Activated T-helper 1 cell treated with anti-CD3 and anti-CD28 coated beads, Interleukin-12 subunit alpha, Interleukin-12 subunit beta, Interleukin-2, Interleukin-4 antibody, amounts not matched to agents 30 ng/mL and 10 ng/mL and 1 ng/mL, durations not matched to agents 14 hours and 24 hours and 36 hours (primary cell): ENCODE measurements at regions of chr7 and their contacts with region 1.

Region 1: GRCh38 chr7:90346336-90347125 is at the start of gene GTPBP10:
- DNase-seq: peak; percentile 94
- H3K4me3 Mint-ChIP-seq: peak within 1 kb of the TSS; percentile 91
- H3K27ac Mint-ChIP-seq: peak within 1 kb of the TSS; percentile 97
- H3K4me1 Mint-ChIP-seq: peaks cover 38% of the 10 kb centered on the region
- H3K27me3 Mint-ChIP-seq: no peaks in the 10 kb centered on the region
- total RNA-seq, gene GTPBP10: 32.6 and 36.2 TPM in 2 replicates

Region 2: GRCh38 chr7:90155206-90155605 is 191.3 kb before region 1 on chr7:
- intact Hi-C with region 1: loop called (anchors 2 kb)
- DNase-seq: no peak
- H3K4me3 Mint-ChIP-seq: peak overlapping the region; percentile 78
- H3K27ac Mint-ChIP-seq: peak overlapping the region; percentile 12
- H3K4me1 Mint-ChIP-seq: peaks cover 5% of the 10 kb centered on the region
- H3K27me3 Mint-ChIP-seq: peaks cover 10% of the 10 kb centered on the region

Region 3: DNA sequence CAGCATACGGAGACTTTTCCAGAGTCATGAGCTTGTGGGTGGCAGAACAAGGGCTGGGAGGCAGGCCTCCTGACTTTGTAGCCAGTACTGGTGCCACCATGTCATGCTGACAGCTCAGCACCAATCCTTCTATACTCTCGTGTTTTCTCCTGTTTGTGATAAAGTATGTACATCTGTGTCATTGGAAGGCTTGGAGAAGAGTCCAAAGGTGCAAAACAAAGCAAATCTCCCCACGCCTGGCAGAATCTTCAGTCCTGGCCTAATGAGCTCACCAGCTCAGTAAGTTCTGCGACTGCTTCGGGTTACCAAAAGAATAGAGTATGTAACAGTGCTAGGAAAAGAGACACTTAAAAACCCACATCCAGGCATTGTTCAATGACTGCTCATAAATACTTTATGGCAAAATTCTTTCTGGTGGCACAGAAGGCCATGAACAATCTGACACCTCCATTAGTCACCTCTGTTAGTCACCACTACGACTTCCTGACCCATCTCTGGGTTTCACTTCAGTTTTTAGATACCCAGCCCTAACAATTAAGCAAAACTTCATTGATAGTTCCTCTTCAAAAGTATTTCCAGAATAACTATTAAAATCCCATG is 167.8 kb before region 1 on chr7:
- intact Hi-C with region 1: loop called (anchors 2 kb)
- DNase-seq: peak; percentile 14
- H3K4me3 Mint-ChIP-seq: peak overlapping the region; percentile 51
- H3K27ac Mint-ChIP-seq: peak overlapping the region; percentile 93
- H3K4me1 Mint-ChIP-seq: peaks cover 29% of the 10 kb centered on the region
- H3K27me3 Mint-ChIP-seq: no peaks in the 10 kb centered on the region

Region 4: DNA sequence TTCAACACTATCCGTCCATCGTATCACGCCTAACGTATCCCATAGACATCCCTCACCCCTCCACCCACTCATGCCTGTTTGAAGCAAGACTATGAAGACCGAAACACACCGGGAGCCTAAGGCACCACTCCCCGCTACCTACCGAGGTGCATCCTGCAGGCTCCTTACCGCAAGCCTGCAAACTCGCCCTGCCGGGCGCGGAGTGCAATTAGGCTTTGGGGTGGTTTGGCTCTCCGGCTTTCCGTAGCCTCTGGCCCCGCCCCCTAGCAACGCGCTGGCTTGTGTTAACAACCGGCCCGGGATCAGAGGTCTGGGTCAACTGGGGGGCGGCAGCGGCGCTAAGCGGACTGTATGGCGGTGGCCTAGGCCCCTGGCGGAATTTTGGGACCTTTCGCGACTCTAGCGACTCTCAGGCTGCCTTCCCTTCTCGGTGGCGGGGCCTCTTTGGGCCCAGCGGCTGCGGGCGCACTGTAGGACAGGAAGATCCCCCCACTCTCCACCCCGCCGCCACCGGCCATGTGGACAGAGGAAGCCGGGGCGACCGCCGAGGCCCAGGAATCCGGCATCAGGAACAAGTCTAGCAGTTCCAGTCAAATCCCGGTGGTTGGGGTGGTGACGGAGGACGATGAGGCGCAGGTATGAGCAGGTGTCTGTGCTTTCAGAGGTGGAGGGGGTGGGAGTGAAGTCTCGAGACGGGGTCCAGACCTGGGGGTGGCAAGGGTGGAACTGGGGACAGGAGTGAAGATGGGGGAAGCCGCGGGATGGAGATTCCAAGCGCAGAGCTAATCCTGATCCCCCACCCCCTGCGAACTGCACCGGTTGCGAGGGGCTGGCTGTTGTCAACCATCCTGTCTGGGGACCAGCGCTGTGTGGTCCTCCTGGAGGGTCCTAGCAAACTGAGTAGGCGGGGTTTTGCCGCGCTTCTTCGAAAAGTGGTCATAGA is 101.4 kb before region 1 on chr7 and contains the start of gene CFAP69:
- intact Hi-C with region 1: loop called (anchors 1 kb)
- DNase-seq: peak; percentile 79
- H3K4me3 Mint-ChIP-seq: peak within 1 kb of the TSS; percentile 88
- H3K27ac Mint-ChIP-seq: peak within 1 kb of the TSS; percentile 60
- H3K4me1 Mint-ChIP-seq: peaks cover 21% of the 10 kb centered on the region
- H3K27me3 Mint-ChIP-seq: peaks cover 28% of the 10 kb centered on the region
- total RNA-seq, gene CFAP69: not detected in 2 replicates

Region 5: GRCh38 chr7:90387470-90388240 is 41.1 kb after region 1 on chr7:
- intact Hi-C with region 1: loop called (anchors 5 kb)
- DNase-seq: no peak
- H3K4me3 Mint-ChIP-seq: no peak overlapping the region
- H3K27ac Mint-ChIP-seq: no peak overlapping the region
- H3K4me1 Mint-ChIP-seq: no peaks in the 10 kb centered on the region
- H3K27me3 Mint-ChIP-seq: no peaks in the 10 kb centered on the region

Region 6: GRCh38 chr7:90403174-90404113 is 56.9 kb after region 1 on chr7 and contains the start of gene CLDN12:
- intact Hi-C with region 1: loop called (anchors 1 kb)
- DNase-seq: peak; percentile 75
- H3K4me3 Mint-ChIP-seq: peak within 1 kb of the TSS; percentile 88
- H3K27ac Mint-ChIP-seq: peak within 1 kb of the TSS; percentile 86
- H3K4me1 Mint-ChIP-seq: peaks cover 28% of the 10 kb centered on the region
- H3K27me3 Mint-ChIP-seq: peaks cover 10% of the 10 kb centered on the region
- total RNA-seq, gene CLDN12: 4.4 and 6.2 TPM in 2 replicates

Region 7: DNA sequence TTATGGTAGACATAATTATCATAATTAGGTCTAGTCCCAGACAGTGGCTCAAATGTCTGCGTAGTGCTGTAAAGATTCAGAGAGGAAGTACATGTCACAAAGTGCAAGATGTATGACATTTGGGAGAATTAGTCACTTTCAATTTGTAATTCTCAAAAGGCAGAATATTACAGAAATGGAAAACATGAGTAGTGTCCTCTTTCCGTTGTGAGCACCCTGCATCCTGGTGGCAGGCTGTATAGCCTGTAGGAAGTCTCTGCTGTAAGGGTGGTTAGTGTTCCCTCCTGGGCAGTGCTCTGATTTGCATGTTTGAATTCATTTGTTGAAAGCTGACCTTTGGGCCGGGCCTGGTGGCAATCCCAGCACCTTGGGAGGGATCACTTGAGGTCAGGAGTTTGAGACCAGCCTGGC is 266.6 kb after region 1 on chr7:
- intact Hi-C with region 1: loop called (anchors 5 kb)
- DNase-seq: no peak
- H3K4me3 Mint-ChIP-seq: no peak overlapping the region
- H3K27ac Mint-ChIP-seq: peak overlapping the region; percentile 69
- H3K4me1 Mint-ChIP-seq: peaks cover 17% of the 10 kb centered on the region
- H3K27me3 Mint-ChIP-seq: no peaks in the 10 kb centered on the region

Region 8: DNA sequence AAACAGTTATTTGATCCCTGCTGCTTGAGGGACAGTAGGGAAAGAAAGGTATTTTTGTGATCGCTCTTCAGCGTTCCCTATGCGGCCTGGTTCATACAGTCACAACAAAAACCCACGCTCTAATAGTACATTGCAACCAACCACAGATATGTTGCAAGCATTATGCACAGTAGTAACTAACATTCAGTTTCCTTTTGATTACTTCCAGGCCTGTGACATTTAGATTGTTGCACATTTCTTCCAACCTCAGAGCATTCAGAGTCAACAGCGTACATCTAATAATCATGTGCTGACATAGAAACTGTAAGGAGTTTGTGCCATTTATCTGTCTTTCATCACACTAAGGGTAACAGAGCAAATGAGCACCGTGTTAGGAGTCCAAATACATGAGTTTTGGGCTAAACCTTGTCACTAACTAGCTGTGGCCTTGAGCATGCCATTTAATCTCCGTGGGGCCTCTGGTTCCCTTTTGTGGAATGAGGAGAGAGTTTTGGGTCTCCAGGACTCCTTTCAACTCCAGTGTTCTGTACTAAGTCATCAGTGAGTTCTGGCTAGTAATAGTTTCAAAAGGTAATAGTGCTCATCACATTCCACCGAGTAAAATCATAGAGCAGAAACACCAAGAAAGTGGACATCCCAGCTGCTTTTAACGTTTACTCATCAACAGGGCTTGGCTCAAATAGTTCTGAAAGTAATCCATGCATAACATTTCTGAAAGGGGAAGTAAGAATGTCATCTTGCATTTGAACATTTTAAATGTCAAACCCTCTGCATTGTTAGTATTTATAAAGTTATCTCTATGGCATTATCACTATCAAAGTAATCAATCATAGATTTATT is 818.7 kb after region 1 on chr7:
- intact Hi-C with region 1: no loop called
- DNase-seq: no peak
- H3K4me3 Mint-ChIP-seq: no peak overlapping the region
- H3K27ac Mint-ChIP-seq: no peak overlapping the region
- H3K4me1 Mint-ChIP-seq: no peaks in the 10 kb centered on the region
- H3K27me3 Mint-ChIP-seq: peaks cover 2% of the 10 kb centered on the region